HepG2 (cell line): ENCODE measurements at regions of chr7 and their contacts with region 1.

Region 1: DNA sequence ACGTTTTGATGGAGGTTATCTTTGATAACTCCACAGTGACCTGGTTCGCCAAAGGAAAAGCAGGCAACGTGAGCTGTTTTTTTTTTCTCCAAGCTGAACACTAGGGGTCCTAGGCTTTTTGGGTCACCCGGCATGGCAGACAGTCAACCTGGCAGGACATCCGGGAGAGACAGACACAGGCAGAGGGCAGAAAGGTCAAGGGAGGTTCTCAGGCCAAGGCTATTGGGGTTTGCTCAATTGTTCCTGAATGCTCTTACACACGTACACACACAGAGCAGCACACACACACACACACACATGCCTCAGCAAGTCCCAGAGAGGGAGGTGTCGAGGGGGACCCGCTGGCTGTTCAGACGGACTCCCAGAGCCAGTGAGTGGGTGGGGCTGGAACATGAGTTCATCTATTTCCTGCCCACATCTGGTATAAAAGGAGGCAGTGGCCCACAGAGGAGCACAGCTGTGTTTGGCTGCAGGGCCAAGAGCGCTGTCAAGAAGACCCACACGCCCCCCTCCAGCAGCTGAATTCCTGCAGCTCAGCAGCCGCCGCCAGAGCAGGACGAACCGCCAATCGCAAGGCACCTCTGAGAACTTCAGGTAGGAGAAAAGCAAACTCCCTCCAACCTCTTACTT is at the start of gene SERPINE1:
- DNase-seq: peak; percentile 98
- ATAC-seq: peak; percentile 77
- H3K4me3 ChIP-seq: peak within 1 kb of the TSS; percentile 74 to 82 (median 76)
- H3K27ac ChIP-seq: peak within 1 kb of the TSS; percentile 99
- H3K4me1 ChIP-seq: peaks cover 89% of the 10 kb centered on the region
- H3K27me3 ChIP-seq: no peaks in the 10 kb centered on the region; a peak in 1 of 5 replicates
- CTCF ChIP-seq: peak; percentile 61
- EP300 ChIP-seq: peak; percentile 71 to 80; a peak in 3 of 4 replicates
- POLR2A ChIP-seq: peak; percentile 99
- RAD21 ChIP-seq: peak; percentile 26; the same call in 1 of the 2 replicates
- total RNA-seq, gene SERPINE1: 9.2 and 21.2 TPM in 2 replicates

Region 2: DNA sequence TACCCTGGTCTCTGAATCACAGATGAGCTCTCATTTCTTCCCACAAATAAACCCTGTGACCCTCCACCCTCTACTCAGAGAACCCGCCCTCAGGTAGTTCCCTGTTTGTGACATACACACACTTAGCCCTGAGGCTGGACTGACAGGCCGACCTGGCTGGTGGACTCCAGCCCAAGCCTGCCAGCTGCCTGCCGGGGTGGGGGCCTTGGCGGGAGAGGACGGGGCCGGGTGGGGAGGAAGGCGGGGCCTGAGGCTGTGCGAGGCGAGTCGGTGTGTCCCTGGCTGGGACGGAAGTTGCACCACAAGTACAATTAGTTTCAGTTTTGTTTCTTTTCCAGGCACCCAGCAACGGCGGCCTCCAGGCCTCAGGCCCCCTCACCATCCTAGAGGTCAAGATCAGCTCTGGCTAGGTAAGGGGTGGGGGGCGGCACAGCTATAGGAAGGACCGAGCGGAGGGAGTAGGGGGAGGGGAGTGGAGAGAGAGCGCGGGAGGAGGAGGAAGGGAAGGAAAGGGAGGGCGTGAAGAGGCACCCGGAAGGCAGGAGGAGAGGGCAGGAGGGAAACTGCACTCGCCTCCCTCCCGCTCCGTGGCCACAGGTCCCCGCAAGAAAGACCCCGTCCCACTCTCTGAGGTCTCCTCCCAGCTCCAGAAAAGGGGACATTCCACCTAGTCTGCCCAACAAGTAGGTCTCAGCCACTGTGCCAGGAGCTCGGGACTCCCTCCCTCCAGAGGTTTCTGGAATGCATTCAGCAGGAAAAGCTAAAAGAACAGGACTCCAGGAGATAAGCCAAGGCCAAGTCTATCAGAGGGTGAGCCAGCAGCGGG is 41.4 kb before region 1 on chr7 and contains the start of gene TRIM56:
- CTCF ChIA-PET with region 1: no interaction called
- POLR2A ChIA-PET with region 1: interaction called, 30 read pairs
- in situ Hi-C with region 1: no loop called
- intact Hi-C with region 1: no loop called
- DNase-seq: peak; percentile 79
- ATAC-seq: peak; percentile 98
- H3K4me3 ChIP-seq: peak within 1 kb of the TSS; percentile 71 to 93 (median 93)
- H3K27ac ChIP-seq: peak within 1 kb of the TSS; percentile 86
- H3K4me1 ChIP-seq: peaks cover 36% of the 10 kb centered on the region
- H3K27me3 ChIP-seq: peaks cover 0 to 2% of the 10 kb centered on the region in 2 experiments; a peak in 1 of 5 replicates
- CTCF ChIP-seq: no peak
- EP300 ChIP-seq: no peak
- POLR2A ChIP-seq: peak; percentile 48 to 69
- RAD21 ChIP-seq: no peak
- total RNA-seq, gene TRIM56: 7.1 and 8.1 TPM in 2 replicates

Region 3: DNA sequence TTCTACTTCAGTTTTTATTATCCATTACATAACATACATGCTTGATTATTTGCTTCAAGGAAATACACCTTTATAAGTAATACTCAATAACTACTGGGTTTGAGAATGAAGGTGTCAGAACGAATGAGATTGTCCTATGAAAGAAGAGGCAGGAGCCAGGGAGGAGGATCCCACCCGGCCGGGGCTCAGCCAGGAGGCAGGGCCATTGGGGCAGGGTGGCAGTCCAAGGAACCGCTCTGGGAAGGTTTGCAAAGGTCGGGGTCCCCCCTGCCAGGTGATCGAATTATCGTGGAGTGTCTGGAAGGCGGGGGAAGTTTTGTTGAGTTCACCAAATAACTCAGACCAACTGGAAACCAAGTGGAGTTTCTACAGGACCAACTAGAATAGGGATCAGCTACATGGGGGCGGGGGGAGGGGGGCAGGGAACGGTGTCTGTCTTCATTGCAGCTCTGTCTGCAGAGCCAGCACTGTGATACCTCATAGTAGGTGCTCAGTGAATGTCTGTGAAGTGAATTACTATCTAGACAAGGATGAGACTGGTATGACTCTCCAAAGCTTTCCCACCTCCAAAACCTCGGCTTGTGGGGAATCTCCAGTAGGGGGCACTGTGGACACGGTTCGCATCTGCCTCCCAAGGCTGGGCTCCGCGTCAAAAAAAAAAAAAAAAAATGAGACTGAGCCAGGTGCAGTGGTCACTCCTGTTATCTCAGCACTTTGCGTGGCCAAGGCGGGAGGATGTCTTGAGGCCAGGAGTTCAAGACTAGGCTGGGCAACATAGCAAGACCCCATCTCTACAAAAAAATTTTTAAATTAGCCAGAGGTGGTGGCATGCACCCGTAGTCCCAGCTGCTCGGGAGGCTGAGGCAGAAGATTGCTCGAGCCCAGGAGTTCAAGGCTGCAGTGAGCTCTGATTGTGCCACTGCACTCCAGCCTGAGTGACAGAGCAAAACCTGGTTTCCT is 32.1 kb before region 1 on chr7:
- CTCF ChIA-PET with region 1: interaction called, 3 read pairs
- POLR2A ChIA-PET with region 1: interaction called, 56 read pairs
- in situ Hi-C with region 1: no loop called
- intact Hi-C with region 1: no loop called
- DNase-seq: peak; percentile 58
- ATAC-seq: peak; percentile 82
- H3K4me3 ChIP-seq: no peak overlapping the region
- H3K27ac ChIP-seq: no peak overlapping the region
- H3K4me1 ChIP-seq: peaks cover 32% of the 10 kb centered on the region
- H3K27me3 ChIP-seq: no peaks in the 10 kb centered on the region
- CTCF ChIP-seq: peak; percentile 87
- EP300 ChIP-seq: no peak
- POLR2A ChIP-seq: no peak
- RAD21 ChIP-seq: peak; percentile 77

Region 4: GRCh38 chr7:101099969-101100781 is 26.6 kb before region 1 on chr7:
- CTCF ChIA-PET with region 1: interaction called, 3 read pairs
- POLR2A ChIA-PET with region 1: interaction called, 56 read pairs
- in situ Hi-C with region 1: no loop called
- intact Hi-C with region 1: loop called (anchors 2 kb)
- DNase-seq: peak; percentile 88
- ATAC-seq: peak; percentile 81
- H3K4me3 ChIP-seq: peak overlapping the region in 1 of 3 experiments; percentile 52; a peak in 2 of 6 replicates
- H3K27ac ChIP-seq: peak overlapping the region; percentile 61
- H3K4me1 ChIP-seq: peaks cover 79% of the 10 kb centered on the region
- H3K27me3 ChIP-seq: no peaks in the 10 kb centered on the region
- CTCF ChIP-seq: no peak; the same call in 1 of the 2 replicates
- EP300 ChIP-seq: peak; percentile 34 to 76; a peak in 1 of 4 replicates
- POLR2A ChIP-seq: peak in 1 of 2 experiments; percentile 34; a peak in 1 of 4 replicates
- RAD21 ChIP-seq: peak; percentile 36; the same call in 1 of the 2 replicates

Region 5: DNA sequence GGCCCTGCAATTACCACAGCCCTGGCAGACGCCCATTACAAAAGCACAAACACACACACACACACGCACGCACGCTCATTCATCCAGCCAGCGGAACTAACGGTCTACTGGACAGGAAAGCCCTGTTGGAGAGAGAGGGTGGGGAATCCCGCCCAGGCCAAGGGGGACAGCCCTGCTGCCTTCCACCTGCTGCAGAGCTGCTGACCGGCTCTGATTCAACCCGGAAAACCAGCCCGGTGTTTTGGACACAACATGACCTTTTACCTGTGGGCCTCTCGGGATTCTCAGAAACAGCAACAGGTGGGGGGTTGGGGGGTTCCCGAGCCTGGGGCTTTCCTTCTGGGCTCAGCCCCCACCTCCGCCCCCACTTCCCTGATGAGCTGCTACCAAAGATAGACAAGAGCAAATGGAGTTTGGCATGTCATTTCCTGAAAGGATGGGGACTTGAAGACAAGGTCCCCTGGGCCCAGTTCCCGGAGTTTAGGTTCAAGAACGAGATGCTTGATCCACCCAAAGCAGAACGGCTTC is 18.4 kb before region 1 on chr7:
- CTCF ChIA-PET with region 1: no interaction called
- POLR2A ChIA-PET with region 1: interaction called, 68 read pairs
- in situ Hi-C with region 1: no loop called
- intact Hi-C with region 1: no loop called
- DNase-seq: peak; percentile 69
- ATAC-seq: peak; percentile 84
- H3K4me3 ChIP-seq: peak overlapping the region in 2 of 3 experiments; percentile 19 to 51; a peak in 3 of 6 replicates
- H3K27ac ChIP-seq: peak overlapping the region; percentile 51
- H3K4me1 ChIP-seq: peaks cover 88% of the 10 kb centered on the region
- H3K27me3 ChIP-seq: 0 out of 5 replicates have a peak, but pooled peaks cover 0 to 3% of the 10 kb centered on the region in 2 experiments
- CTCF ChIP-seq: 0 out of 2 replicates have a peak, but pooled peaks have one; percentile 9
- EP300 ChIP-seq: no peak
- POLR2A ChIP-seq: peak in 1 of 2 experiments; percentile 31; a peak in 1 of 4 replicates
- RAD21 ChIP-seq: no peak